AG04450 (cell line): ENCODE measurements at regions of chr1 and their contacts with region 1.

Region 1: DNA sequence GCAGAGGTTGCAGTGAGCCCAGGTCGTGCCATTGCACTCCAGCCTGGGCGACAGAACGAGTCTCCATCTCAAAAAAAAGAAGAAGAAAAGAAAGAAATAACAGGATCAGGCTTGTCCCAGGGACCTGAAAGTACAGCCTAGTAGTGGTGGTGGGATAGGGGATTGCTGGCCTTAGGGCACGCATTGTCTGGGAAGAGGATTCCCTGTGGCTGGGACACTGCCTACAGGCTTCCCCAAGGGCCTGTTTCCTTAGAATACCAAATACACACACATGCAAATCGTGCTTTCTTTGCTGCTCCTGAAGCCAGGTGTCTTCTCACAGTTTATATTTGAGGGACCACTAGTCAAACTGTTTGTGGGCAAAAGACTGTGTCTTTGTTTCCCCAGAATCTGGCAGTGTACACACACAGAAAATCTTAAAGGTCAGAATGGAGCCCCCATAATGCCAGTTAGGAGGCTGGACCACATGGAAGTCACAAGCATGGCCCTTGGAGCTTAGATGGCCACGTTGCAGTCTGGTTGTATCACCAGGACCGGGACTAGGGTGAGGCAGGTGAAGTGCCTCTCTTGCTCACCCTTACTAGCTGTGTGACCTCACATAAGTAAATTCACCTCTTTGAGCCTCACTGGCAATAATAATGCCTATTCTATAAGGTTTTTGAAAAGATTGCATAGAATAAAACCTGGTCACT is 12.7 kb upstream of the ASAP3 start:
- DNase-seq: no peak
- H3K4me3 ChIP-seq: no peak overlapping the region
- H3K27ac ChIP-seq: no peak overlapping the region
- H3K27me3 ChIP-seq: peaks cover 3% of the 10 kb centered on the region
- CTCF ChIP-seq: no peak

Region 2: DNA sequence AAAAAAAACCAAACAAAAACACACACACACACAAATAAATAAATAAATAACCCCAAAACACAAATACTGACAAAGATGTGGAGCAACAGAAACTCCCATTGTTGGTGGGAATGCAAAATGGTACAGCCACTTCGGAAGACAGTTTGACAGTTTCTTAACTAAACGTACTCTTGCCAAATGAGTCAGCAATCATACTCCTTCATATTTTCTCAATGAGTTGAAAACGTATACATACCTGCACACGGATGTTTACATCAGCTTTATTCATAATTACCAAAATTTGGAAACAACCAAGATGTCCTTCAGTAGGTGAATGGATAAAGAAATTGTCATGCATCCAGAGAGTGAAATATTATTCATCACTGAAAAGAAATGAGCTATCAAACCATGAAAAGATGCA is 36.1 kb before region 1 on chr1:
- CTCF ChIA-PET with region 1: interaction called, 11 read pairs
- POLR2A ChIA-PET with region 1: no interaction called
- DNase-seq: no peak
- H3K4me3 ChIP-seq: no peak overlapping the region
- H3K27ac ChIP-seq: no peak overlapping the region
- H3K27me3 ChIP-seq: no peaks in the 10 kb centered on the region
- CTCF ChIP-seq: no peak

Region 3: DNA sequence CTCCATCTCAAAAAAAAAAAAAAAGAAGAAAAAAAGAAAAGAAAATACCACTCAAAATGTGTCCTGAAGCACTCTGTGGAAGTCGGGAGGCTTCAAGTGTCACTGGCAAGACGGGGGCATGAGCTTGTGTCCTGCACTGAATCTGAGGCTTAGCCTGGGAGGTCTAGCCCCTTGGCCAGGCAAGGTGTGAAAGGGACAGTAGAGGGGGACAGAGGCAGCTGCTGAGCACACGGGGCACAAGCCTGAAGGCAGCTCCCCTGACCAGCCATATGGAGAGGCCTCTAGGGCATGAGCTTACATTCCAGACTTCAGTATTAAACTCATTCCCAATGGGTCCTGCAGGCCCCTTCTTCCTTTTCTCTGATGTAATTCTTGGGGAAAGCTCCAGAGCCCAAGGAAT is 10.9 kb after region 1 on chr1:
- CTCF ChIA-PET with region 1: interaction called, 40 read pairs
- POLR2A ChIA-PET with region 1: no interaction called
- DNase-seq: no peak
- H3K4me3 ChIP-seq: no peak overlapping the region
- H3K27ac ChIP-seq: no peak overlapping the region
- H3K27me3 ChIP-seq: no peaks in the 10 kb centered on the region
- CTCF ChIP-seq: no peak

Region 4: GRCh38 chr1:23530747-23531561 is 34.3 kb after region 1 on chr1 and contains the start of gene E2F2:
- CTCF ChIA-PET with region 1: interaction called, 19 read pairs
- POLR2A ChIA-PET with region 1: no interaction called
- DNase-seq: peak; percentile 56
- H3K4me3 ChIP-seq: peak within 1 kb of the TSS; percentile 69
- H3K27ac ChIP-seq: peak within 1 kb of the TSS; percentile 21
- H3K27me3 ChIP-seq: no peaks in the 10 kb centered on the region
- CTCF ChIP-seq: no peak
- polyA plus RNA-seq, gene E2F2: 0.05 and 0.06 TPM in 2 replicates

Region 5: DNA sequence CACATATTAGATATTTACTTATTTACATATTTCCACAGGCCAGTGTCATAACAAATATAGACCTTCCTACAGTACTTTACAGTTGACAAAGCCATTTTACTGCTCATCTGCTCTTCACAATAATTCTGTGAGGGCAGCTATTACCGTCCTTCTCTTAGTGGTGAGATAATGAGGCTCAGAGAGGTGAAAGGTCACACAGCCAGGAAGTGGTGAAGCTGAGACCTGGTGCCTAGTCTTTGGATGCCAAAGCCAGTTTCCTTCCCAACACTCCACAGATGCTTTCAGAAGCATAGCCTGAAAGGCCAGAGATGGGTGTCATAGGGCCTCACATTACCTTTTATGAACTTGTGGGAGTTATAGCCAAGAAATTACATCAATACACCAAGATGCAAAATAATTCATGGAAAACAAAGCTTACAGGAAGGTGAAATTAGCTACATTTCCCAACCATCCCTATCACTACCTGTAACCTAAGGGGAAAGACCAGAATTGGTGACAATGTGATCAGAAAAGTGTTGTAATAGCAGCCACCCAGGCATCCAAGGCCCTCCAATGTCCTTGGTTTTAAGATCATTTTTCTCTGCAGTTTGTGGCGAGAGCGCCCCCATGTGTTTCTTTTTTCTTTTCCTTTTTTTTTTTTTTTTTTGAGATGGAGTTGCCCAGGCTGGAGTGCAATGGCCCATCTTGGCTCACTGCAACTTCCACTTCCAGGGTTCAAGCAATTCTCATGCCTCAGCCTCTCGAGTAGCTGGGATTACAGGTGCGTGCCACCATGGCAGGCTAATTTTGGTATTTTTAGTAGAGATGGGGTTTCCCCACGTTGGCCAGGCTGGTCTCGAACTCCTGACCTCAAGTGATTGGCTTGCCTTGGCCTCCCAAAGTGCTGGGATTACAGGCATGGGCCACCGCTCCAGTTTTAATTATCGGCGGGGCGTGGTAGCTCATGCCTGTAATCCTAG is 168.5 kb after region 1 on chr1:
- CTCF ChIA-PET with region 1: interaction called, 33 read pairs
- POLR2A ChIA-PET with region 1: no interaction called
- DNase-seq: no peak
- H3K4me3 ChIP-seq: no peak overlapping the region
- H3K27ac ChIP-seq: no peak overlapping the region
- H3K27me3 ChIP-seq: peaks cover 4% of the 10 kb centered on the region
- CTCF ChIP-seq: peak; percentile 45

Region 6: GRCh38 chr1:24186993-24187805 is 690.6 kb after region 1 on chr1 and contains the start of gene IFNLR1:
- CTCF ChIA-PET with region 1: no interaction called
- POLR2A ChIA-PET with region 1: no interaction called
- DNase-seq: no peak
- H3K4me3 ChIP-seq: peak within 1 kb of the TSS; percentile 52
- H3K27ac ChIP-seq: no peak within 1 kb of the TSS
- H3K27me3 ChIP-seq: peaks cover 26% of the 10 kb centered on the region
- CTCF ChIP-seq: no peak
- polyA plus RNA-seq, gene IFNLR1: not detected in 2 replicates